GM12878 (cell line): ENCODE measurements at regions of chrX and their contacts with region 1.

Region 1: GRCh38 chrX:81377329-81377728 is 175.4 kb downstream of the SH3BGRL start:
- DNase-seq: no peak
- ATAC-seq: peak; percentile 58
- H3K4me3 ChIP-seq: no peak overlapping the region
- H3K27ac ChIP-seq: no peak overlapping the region
- H3K4me1 ChIP-seq: no peaks in the 10 kb centered on the region
- H3K27me3 ChIP-seq: no peaks in the 10 kb centered on the region
- CTCF ChIP-seq: peak; percentile 39 to 56 (median 49); a peak in 5 of 6 replicates
- EP300 ChIP-seq: no peak
- POLR2A ChIP-seq: no peak
- RAD21 ChIP-seq: peak; percentile 68

Region 2: GRCh38 chrX:80876877-80877276 is 500.5 kb before region 1 on chrX:
- CTCF ChIA-PET with region 1: interaction called, 12 read pairs
- POLR2A ChIA-PET with region 1: no interaction called
- RAD21 ChIA-PET with region 1: interaction called, 9 read pairs
- SMC1A ChIA-PET with region 1: interaction called, 7 read pairs
- in situ Hi-C with region 1: loop called (anchors 10 kb)
- intact Hi-C with region 1: loop called (anchors 1 kb)
- DNase-seq: peak; percentile 1
- ATAC-seq: 0 out of 3 replicates have a peak, but pooled peaks have one; percentile 37
- H3K4me3 ChIP-seq: no peak overlapping the region
- H3K27ac ChIP-seq: no peak overlapping the region
- H3K4me1 ChIP-seq: no peaks in the 10 kb centered on the region
- H3K27me3 ChIP-seq: no peaks in the 10 kb centered on the region
- CTCF ChIP-seq: peak; percentile 30 to 49 (median 36); a peak in 4 of 6 replicates
- EP300 ChIP-seq: no peak
- POLR2A ChIP-seq: no peak
- RAD21 ChIP-seq: peak; percentile 65

Region 3: DNA sequence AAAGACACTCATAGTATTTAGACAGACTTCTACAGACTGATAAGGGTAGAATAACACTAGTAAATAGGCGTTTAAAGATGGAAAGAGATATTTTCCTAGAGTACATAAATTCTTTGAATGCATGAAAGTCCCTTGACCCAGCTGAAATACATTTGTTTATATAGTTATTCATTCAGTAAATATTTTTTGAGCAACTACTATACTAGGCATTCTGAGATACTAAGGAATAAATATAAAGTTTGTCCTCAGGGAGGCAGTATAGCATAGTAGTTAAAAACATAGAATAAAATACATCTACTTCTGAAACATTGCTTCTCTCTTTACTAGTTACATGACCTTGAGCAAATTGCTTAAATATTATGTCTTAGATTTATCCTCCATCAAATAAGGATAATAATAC is 203.0 kb before region 1 on chrX:
- CTCF ChIA-PET with region 1: interaction called, 11 read pairs
- POLR2A ChIA-PET with region 1: no interaction called
- RAD21 ChIA-PET with region 1: interaction called, 6 read pairs
- SMC1A ChIA-PET with region 1: interaction called, 3 read pairs
- in situ Hi-C with region 1: no loop called
- intact Hi-C with region 1: loop called (anchors 1 kb)
- DNase-seq: no peak
- ATAC-seq: peak; percentile 66
- H3K4me3 ChIP-seq: no peak overlapping the region
- H3K27ac ChIP-seq: no peak overlapping the region
- H3K4me1 ChIP-seq: no peaks in the 10 kb centered on the region
- H3K27me3 ChIP-seq: no peaks in the 10 kb centered on the region
- CTCF ChIP-seq: peak in 1 of 3 experiments; percentile 14; a peak in 2 of 6 replicates
- EP300 ChIP-seq: no peak
- POLR2A ChIP-seq: no peak
- RAD21 ChIP-seq: 0 out of 2 replicates have a peak, but pooled peaks have one; percentile 13

Region 4: DNA sequence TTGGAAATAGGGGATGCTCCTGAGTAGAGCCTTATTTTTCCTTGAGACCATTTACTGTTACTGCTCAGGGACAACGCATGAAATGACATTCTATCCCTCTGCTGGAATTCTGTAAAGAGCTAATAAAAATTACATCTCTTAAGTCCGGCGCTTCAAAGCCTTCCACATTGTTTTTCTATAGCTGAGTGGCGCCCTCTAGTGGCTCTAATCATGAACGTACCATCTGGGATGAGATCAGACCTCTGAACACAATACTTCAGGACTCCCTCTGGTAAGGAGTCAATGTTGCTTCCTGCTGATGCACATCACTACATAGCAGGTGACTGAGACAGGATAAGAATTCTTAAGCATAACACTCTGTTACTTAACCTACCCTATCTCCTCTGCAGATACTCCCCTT is 181.6 kb before region 1 on chrX:
- CTCF ChIA-PET with region 1: interaction called, 8 read pairs
- POLR2A ChIA-PET with region 1: no interaction called
- RAD21 ChIA-PET with region 1: interaction called, 4 read pairs
- SMC1A ChIA-PET with region 1: interaction called, 7 read pairs
- in situ Hi-C with region 1: loop called (anchors 10 kb)
- intact Hi-C with region 1: loop called (anchors 5 kb)
- DNase-seq: no peak
- ATAC-seq: peak; percentile 99
- H3K4me3 ChIP-seq: no peak overlapping the region
- H3K27ac ChIP-seq: no peak overlapping the region
- H3K4me1 ChIP-seq: no peaks in the 10 kb centered on the region
- H3K27me3 ChIP-seq: no peaks in the 10 kb centered on the region
- CTCF ChIP-seq: peak; percentile 64 to 77 (median 75)
- EP300 ChIP-seq: no peak
- POLR2A ChIP-seq: no peak
- RAD21 ChIP-seq: peak; percentile 70

Region 5: DNA sequence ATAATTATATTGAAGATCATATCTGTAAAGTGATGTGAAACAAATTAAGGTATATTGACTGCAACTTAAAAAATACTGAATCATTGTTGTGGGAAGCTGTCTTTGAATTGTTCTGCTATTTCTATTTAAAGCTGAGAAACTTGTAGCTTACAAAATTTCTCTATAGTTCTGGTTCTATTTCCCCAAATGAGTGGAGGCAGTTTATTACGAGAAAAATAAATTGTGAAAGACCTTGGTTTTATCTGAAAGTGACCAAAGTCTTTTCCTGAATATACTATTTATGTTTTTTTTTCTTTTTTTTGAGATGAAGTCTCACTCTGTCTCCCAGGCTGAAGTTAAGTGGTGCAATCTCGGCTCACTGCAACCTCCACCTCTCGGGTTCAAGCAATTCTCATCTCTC is 10.0 kb before region 1 on chrX:
- CTCF ChIA-PET with region 1: interaction called, 13 read pairs
- POLR2A ChIA-PET with region 1: no interaction called
- RAD21 ChIA-PET with region 1: no interaction called
- SMC1A ChIA-PET with region 1: no interaction called
- in situ Hi-C with region 1: no loop called
- intact Hi-C with region 1: no loop called
- DNase-seq: no peak
- ATAC-seq: no peak
- H3K4me3 ChIP-seq: no peak overlapping the region
- H3K27ac ChIP-seq: no peak overlapping the region
- H3K4me1 ChIP-seq: no peaks in the 10 kb centered on the region
- H3K27me3 ChIP-seq: no peaks in the 10 kb centered on the region
- CTCF ChIP-seq: no peak
- EP300 ChIP-seq: no peak
- POLR2A ChIP-seq: no peak
- RAD21 ChIP-seq: no peak